ENCODE measurements at regions of chr2 and their contacts with region 1.

Region 1: GRCh38 chr2:75640621-75641121 is 5.9 kb upstream of the MRPL19 start:
- DNase-seq: no peak
- H3K4me3 ChIP-seq: no peak overlapping the region
- CTCF ChIP-seq: peak; percentile 97

Region 2: DNA sequence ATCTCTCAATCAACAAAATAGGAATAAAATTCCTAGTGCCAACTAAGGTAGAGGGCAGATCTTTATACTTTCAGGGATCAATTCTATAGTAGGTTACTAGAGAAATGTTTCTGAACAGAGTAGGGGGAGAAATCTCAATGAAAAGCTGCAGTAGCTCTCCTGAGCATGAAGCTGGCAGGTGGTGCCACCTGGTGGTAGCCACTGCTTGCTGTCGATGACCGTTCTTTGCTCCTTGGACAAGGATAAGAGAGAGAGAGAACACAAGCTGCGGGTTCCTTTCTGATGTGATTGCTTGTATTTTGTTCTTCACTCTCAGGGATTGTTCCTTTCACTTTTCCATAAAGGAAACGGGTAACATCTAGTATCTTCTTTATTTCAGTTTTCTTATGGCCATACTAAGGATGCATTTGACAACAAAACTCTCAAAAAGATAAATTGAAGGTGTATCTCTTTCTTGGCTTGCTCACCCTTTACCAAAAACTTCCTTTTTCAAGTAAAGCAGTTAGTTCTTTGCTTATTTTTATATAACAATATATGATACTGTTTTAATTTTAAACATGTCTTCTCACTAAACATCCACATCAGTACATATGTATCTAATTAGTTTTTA is 12.7 kb before region 1 on chr2:
- CTCF ChIA-PET with region 1: interaction called, 77 read pairs
- POLR2A ChIA-PET with region 1: no interaction called
- DNase-seq: no peak
- H3K4me3 ChIP-seq: no peak overlapping the region
- CTCF ChIP-seq: peak; percentile 91

Region 3: GRCh38 chr2:75667884-75668283 is 27.2 kb after region 1 on chr2:
- CTCF ChIA-PET with region 1: interaction called, 120 read pairs
- POLR2A ChIA-PET with region 1: no interaction called
- DNase-seq: no peak
- H3K4me3 ChIP-seq: no peak overlapping the region
- CTCF ChIP-seq: no peak

Region 4: DNA sequence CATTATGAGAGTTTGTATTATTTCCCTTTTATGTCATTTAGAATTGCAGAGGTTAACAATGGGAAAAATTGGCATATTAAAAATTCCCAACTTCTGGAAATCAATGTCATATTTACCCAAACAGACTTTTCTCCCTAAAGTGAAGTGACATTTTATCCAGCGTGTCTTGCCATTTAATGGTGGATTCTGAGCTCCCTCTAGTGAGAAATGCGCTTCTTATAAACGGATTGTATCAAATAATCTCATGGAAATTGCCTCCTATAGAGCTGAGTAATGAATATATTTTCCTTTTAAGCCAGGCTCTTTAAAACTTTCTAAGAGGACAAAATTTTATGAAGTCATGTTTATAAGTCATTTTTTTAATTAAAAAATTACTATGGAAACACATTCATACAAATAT is 75.7 kb after region 1 on chr2:
- CTCF ChIA-PET with region 1: interaction called, 14 read pairs
- POLR2A ChIA-PET with region 1: no interaction called
- DNase-seq: no peak
- H3K4me3 ChIP-seq: no peak overlapping the region
- CTCF ChIP-seq: no peak

Measured in AG04449 (cell line).